Posterior vena cava (tissue), 2 donors: ENCODE measurements at regions of chr5 and their contacts with region 1.

Region 1: GRCh38 chr5:170267431-170268152 is 30.0 kb downstream of the LCP2 start:
- DNase-seq: peak; percentile 92

Region 2: DNA sequence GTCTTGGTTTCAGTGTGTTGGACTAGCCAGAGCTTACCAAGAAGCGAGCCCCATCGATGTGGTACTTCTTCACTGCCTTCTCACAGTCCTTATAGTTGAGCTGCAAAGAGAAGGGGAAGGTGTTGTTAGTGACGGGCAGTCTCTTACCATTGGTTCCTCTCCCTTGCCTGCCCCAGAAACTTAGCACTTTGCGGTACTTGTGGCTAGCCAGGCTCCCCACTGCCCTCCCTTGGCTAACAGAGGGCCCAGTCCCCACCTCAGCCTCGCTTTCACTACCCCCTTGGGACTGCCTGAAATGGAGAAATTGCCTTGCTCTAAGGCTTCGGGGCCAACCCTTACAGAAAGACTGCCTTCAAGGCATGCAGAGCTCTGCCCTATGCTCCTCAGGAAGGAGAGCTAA is 25.7 kb after region 1 on chr5:
- intact Hi-C with region 1: no loop called
- DNase-seq: no peak

Region 3: DNA sequence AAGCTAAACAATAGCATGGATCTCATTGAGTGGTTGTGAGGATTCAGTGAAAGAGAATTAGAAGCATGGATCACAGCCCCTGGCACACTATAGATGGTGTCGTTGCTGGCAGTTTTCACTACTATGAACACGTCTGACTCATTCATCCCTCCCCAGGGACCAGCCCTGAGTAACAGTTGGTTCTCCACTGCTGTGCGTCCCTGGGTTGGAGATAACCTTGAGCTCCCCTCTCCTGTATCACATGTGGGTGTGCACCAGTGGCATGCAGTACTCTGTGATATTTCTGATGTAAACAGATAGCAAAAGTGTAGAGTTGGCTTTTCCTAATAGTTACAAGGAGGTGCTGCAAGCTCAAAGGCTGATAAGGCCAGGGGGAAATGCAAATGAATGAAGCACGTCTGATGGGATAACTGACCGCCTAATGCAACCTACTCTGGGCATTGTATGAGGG is 38.8 kb after region 1 on chr5:
- intact Hi-C with region 1: no loop called
- DNase-seq: peak; percentile 93

Region 4: DNA sequence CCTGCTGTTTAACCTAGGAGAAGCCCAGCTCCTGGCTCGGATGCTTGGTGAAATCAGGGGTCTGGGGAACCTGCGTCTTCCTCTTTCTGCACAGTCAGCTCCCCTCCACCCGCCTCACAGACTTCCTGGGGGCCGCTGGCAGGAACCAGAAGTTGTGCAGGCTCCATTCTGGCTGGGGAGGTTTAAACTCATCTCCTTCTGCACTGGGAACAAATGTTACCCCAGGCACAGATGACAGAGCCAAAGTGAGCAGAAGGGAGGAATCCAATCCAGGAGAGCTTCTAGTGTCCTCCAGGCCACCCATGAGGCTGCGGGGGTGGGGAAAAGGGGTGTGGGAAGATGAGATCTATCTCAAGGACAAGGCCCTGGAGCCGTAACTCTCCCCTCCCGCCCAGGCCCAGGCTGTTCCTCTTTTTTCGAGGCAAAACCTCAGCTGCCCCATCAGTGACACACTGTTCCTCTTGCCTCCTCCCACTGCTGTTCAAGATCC is 90.4 kb after region 1 on chr5:
- intact Hi-C with region 1: loop called in 1 of 2 experiments (anchors 10 kb)
- DNase-seq: peak; percentile 92